Activated CD8-positive, alpha-beta memory T cell treated with anti-CD3 and anti-CD28 coated beads, Interleukin-2, amount 10 ng/mL, durations not matched to agents 7 days and 5 days (primary cell): ENCODE measurements at regions of chr11 and their contacts with region 1.

Region 1: GRCh38 chr11:129364143-129364654 is 11.4 kb upstream of the BARX2 start:
- DNase-seq: peak; percentile 85
- ATAC-seq: peak; percentile 100
- H3K4me3 Mint-ChIP-seq: no peak overlapping the region
- H3K27ac Mint-ChIP-seq: no peak overlapping the region
- H3K4me1 Mint-ChIP-seq: no peaks in the 10 kb centered on the region
- H3K27me3 Mint-ChIP-seq: peaks cover 50% of the 10 kb centered on the region

Region 2: DNA sequence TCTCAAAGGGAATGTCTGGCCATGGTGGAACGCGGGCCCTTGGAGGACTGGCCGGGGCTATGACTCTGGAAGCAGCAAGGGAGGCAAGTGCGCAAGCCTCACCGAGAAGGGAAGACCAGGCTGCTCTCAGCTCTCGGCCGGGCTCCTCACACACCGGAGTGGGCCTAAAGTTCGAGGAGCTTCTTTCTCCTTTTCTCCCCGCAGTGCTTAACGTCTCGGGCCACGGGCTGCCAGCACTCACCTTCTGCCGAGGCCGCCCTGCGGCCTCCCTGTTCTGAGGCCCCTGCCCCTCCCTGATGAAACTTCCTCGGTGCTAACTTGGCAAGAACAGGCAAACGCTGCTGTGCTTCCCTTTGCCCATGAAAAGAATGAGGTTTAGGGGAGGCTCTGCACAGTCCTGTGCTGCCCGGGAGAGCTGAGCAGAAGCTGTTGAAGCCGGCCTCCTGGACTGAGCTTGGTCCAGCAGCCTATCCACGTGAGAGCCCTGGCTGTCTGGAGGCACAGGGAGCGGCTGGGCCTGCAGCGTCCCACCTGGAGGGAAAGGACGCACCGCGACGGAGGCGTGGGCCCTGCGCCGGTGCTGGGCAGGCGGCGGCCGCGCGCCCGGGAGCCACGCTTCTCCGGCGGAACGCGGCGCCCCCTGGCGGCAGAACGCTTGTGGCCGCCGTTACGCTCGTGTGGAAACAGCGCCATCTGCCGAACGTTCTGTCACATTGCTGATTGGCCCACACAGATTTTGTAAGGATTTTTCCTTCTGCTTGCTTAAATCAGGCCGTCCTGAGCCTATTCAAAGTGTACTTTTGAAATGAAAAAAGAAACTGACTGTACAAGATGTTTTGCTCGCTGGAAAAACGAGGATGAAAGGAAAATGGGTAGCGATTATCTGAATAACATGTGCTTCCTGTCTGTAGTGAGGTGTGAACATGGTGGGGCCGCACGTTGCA is 386.4 kb after region 1 on chr11:
- CTCF ChIA-PET with region 1: interaction called, 12 read pairs
- DNase-seq: peak; percentile 77
- ATAC-seq: peak; percentile 95
- H3K4me3 Mint-ChIP-seq: no peak overlapping the region
- H3K27ac Mint-ChIP-seq: no peak overlapping the region
- H3K4me1 Mint-ChIP-seq: peaks cover 4% of the 10 kb centered on the region
- H3K27me3 Mint-ChIP-seq: peaks cover 26% of the 10 kb centered on the region